MCF 10A (cell line): ENCODE measurements at regions of chr19 and their contacts with region 1.

Region 1: GRCh38 chr19:34475026-34475974 is 6.3 kb upstream of the WTIP start:
- DNase-seq: peak; percentile 88
- H3K4me3 Mint-ChIP-seq: no peak overlapping the region
- H3K27ac Mint-ChIP-seq: peak overlapping the region; percentile 46
- H3K4me1 Mint-ChIP-seq: peaks cover 8% of the 10 kb centered on the region
- H3K27me3 Mint-ChIP-seq: no peaks in the 10 kb centered on the region
- CTCF ChIP-seq: no peak

Region 2: GRCh38 chr19:34501339-34502320 is 26.3 kb after region 1 on chr19:
- CTCF ChIA-PET with region 1: interaction called, 10 read pairs
- POLR2A ChIA-PET with region 1: interaction called, 3 read pairs
- intact Hi-C with region 1: no loop called
- DNase-seq: peak; percentile 91
- H3K4me3 Mint-ChIP-seq: no peak overlapping the region
- H3K27ac Mint-ChIP-seq: no peak overlapping the region
- H3K4me1 Mint-ChIP-seq: peaks cover 6% of the 10 kb centered on the region
- H3K27me3 Mint-ChIP-seq: no peaks in the 10 kb centered on the region
- CTCF ChIP-seq: peak; percentile 99